Ascending aorta (tissue), 2 donors: ENCODE measurements at regions of chr13 and their contacts with region 1.

Region 1: GRCh38 chr13:36880961-36881360 is 39.1 kb downstream of the SMAD9 start:
- DNase-seq: no peak
- H3K4me3 ChIP-seq: no peak overlapping the region
- H3K27ac ChIP-seq: no peak overlapping the region
- H3K4me1 ChIP-seq: peaks cover 0 to 9% of the 10 kb centered on the region in 2 donors
- H3K27me3 ChIP-seq: no peaks in the 10 kb centered on the region
- CTCF ChIP-seq: no peak

Region 2: GRCh38 chr13:36945078-36945477 is 64.1 kb after region 1 on chr13:
- intact Hi-C with region 1: loop called (anchors 5 kb)
- DNase-seq: no peak
- H3K4me3 ChIP-seq: no peak overlapping the region
- H3K27ac ChIP-seq: no peak overlapping the region
- H3K4me1 ChIP-seq: no peaks in the 10 kb centered on the region
- H3K27me3 ChIP-seq: no peaks in the 10 kb centered on the region
- CTCF ChIP-seq: no peak